ENCODE measurements at regions of chr5 and their contacts with region 1.

Region 1: GRCh38 chr5:137310051-137310730 is 188.9 kb downstream of the SPOCK1 start:
- DNase-seq: no peak
- H3K4me3 ChIP-seq: no peak overlapping the region
- H3K4me1 ChIP-seq: no peaks in the 10 kb centered on the region
- H3K27me3 ChIP-seq: peaks cover 5% of the 10 kb centered on the region; the same call in 1 of the 2 replicates

Region 2: GRCh38 chr5:137501846-137502406 is 191.7 kb after region 1 on chr5:
- in situ Hi-C with region 1: loop called (anchors 10 kb)
- DNase-seq: no peak
- H3K4me3 ChIP-seq: no peak overlapping the region
- H3K4me1 ChIP-seq: no peaks in the 10 kb centered on the region
- H3K27me3 ChIP-seq: no peaks in the 10 kb centered on the region

Measured in HAP-1 (cell line).